Activated B cell treated with CpG ODN at 0.5 μM for 24 hours (primary cell): ENCODE measurements at regions of chr1 and their contacts with region 1.

Region 1: GRCh38 chr1:6613361-6614018 is at the start of gene PHF13:
- DNase-seq: peak; percentile 99
- ATAC-seq: peak; percentile 96
- H3K4me3 Mint-ChIP-seq: peak within 1 kb of the TSS; percentile 90
- H3K27ac Mint-ChIP-seq: peak within 1 kb of the TSS; percentile 83
- H3K4me1 Mint-ChIP-seq: peaks cover 15% of the 10 kb centered on the region
- H3K27me3 Mint-ChIP-seq: no peaks in the 10 kb centered on the region
- CTCF ChIP-seq: no peak
- total RNA-seq, gene PHF13: 5.4 and 6.1 TPM in 2 replicates

Region 2: DNA sequence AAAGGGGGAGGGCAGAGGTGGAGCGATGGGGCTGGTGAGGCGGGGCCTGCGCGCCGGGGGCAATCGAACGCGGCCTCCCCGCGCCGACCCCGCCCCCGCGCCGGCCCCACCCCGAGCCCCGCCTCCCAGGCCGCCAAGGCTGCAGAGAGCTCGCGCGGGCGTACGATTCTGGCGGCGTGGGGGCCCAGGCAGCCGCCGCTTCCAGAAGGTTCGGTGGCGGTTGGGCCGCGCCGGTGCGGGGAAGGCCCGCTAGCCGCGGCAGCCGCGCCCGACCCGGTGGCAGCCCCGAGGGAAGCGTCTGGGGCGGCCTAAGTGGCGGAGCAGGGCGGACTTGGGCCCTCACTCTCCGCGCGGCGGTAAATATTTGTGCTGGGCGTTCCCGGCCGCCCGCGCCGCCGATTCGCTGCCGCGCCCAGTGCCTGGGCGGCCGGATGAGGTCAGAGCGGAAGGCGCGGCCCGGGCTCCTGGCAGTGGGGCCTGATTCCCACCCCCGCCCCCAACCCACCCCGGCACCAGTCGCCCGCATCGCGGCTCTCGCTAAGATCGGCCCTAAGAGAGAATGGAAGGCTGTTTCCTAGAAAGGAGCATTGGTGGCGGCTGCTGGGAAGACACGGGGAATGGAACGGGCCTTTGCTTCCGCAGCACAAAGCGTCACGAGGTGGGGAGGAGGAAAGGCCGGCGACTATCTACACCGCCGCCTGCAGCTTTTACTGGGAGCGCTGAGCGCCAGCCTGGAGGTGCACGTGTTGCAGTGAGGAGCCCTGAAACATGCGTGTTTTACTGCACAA is 219.9 kb before region 1 on chr1 and contains the start of gene ACOT7:
- CTCF ChIA-PET with region 1: no interaction called
- POLR2A ChIA-PET with region 1: no interaction called
- intact Hi-C with region 1: loop called (anchors 5 kb)
- DNase-seq: peak; percentile 86
- ATAC-seq: peak; percentile 91
- H3K4me3 Mint-ChIP-seq: peak within 1 kb of the TSS; percentile 87
- H3K27ac Mint-ChIP-seq: peak within 1 kb of the TSS; percentile 93
- H3K4me1 Mint-ChIP-seq: peaks cover 22% of the 10 kb centered on the region
- H3K27me3 Mint-ChIP-seq: no peaks in the 10 kb centered on the region
- CTCF ChIP-seq: no peak
- total RNA-seq, gene ACOT7: 12.3 and 12.7 TPM in 2 replicates

Region 3: DNA sequence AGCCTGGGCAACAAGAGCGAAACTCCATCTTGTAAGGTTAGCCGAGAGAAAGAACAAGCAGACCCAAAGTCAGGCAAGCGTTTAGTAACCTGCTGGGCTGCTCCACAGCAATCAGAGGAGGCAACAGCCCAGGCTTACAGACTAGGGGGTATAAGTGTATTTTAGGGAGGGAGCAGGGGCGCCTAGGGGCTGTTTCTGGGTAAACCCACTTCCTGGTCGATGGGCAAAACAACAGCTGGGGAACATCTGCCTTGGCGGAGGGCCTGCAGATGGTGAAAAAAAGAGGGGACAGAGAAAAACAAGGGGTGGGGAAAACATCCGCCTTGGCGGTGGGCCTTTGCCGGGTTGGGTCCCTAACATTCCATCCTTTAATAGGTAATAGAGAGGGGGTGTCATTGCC is 53.2 kb before region 1 on chr1:
- CTCF ChIA-PET with region 1: no interaction called
- POLR2A ChIA-PET with region 1: no interaction called
- intact Hi-C with region 1: no loop called
- DNase-seq: no peak
- ATAC-seq: no peak
- H3K4me3 Mint-ChIP-seq: no peak overlapping the region
- H3K27ac Mint-ChIP-seq: no peak overlapping the region
- H3K4me1 Mint-ChIP-seq: peaks cover 1% of the 10 kb centered on the region
- H3K27me3 Mint-ChIP-seq: peaks cover 1% of the 10 kb centered on the region
- CTCF ChIP-seq: no peak

Region 4: DNA sequence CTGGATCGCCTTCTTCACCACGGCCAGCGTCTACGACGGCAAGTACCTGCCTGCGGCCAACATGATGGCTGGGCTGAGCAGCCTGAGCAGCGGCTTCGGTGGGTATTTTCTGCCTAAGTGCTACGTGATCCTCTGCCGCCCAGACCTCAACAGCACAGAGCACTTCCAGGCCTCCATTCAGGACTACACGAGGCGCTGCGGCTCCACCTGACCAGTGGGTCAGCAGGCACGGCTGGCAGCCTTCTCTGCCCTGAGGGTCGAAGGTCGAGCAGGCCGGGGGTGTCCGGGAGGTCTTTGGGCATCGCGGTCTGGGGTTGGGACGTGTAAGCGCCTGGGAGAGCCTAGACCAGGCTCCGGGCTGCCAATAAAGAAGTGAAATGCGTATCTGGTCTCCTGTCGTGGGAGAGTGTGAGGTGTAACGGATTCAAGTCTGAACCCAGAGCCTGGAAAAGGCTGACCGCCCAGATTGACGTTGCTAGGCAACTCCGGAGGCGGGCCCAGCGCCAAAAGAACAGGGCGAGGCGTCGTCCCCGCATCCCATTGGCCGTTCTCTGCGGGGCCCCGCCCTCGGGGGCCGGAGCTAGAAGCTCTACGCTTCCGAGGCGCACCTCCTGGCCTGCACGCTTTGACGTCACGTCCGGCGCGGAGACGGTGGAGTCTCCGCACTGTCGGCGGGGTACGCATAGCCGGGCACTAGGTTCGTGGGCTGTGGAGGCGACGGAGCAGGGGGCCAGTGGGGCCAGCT is 33.9 kb before region 1 on chr1 and contains the start of gene ZBTB48:
- CTCF ChIA-PET with region 1: no interaction called
- POLR2A ChIA-PET with region 1: interaction called, 16 read pairs
- intact Hi-C with region 1: loop called (anchors 1 kb)
- DNase-seq: peak; percentile 95
- ATAC-seq: peak; percentile 97
- H3K4me3 Mint-ChIP-seq: peak within 1 kb of the TSS; percentile 95
- H3K27ac Mint-ChIP-seq: peak within 1 kb of the TSS; percentile 94
- H3K4me1 Mint-ChIP-seq: peaks cover 37% of the 10 kb centered on the region
- H3K27me3 Mint-ChIP-seq: no peaks in the 10 kb centered on the region
- CTCF ChIP-seq: no peak
- total RNA-seq, gene ZBTB48: 53.2 and 53.8 TPM in 2 replicates

Region 5: GRCh38 chr1:6624710-6625583 is 11.5 kb after region 1 on chr1 and contains the start of gene THAP3:
- CTCF ChIA-PET with region 1: no interaction called
- POLR2A ChIA-PET with region 1: interaction called, 3 read pairs
- intact Hi-C with region 1: loop called (anchors 1 kb)
- DNase-seq: peak; percentile 83
- ATAC-seq: peak; percentile 97
- H3K4me3 Mint-ChIP-seq: peak within 1 kb of the TSS; percentile 86
- H3K27ac Mint-ChIP-seq: peak within 1 kb of the TSS; percentile 71
- H3K4me1 Mint-ChIP-seq: peaks cover 32% of the 10 kb centered on the region
- H3K27me3 Mint-ChIP-seq: no peaks in the 10 kb centered on the region
- CTCF ChIP-seq: no peak
- total RNA-seq, gene THAP3: 16.2 and 21.3 TPM in 2 replicates

Region 6: GRCh38 chr1:6743189-6744101 is 130.0 kb after region 1 on chr1:
- CTCF ChIA-PET with region 1: no interaction called
- POLR2A ChIA-PET with region 1: no interaction called
- intact Hi-C with region 1: no loop called
- DNase-seq: peak; percentile 16
- ATAC-seq: peak; percentile 50
- H3K4me3 Mint-ChIP-seq: no peak overlapping the region
- H3K27ac Mint-ChIP-seq: no peak overlapping the region
- H3K4me1 Mint-ChIP-seq: peaks cover 12% of the 10 kb centered on the region
- H3K27me3 Mint-ChIP-seq: peaks cover 7% of the 10 kb centered on the region
- CTCF ChIP-seq: no peak

Region 7: GRCh38 chr1:7704214-7705047 is 1090.9 kb after region 1 on chr1:
- CTCF ChIA-PET with region 1: no interaction called
- POLR2A ChIA-PET with region 1: no interaction called
- intact Hi-C with region 1: loop called (anchors 5 kb)
- DNase-seq: peak; percentile 99
- ATAC-seq: peak; percentile 98
- H3K4me3 Mint-ChIP-seq: peak overlapping the region; percentile 82
- H3K27ac Mint-ChIP-seq: no peak overlapping the region
- H3K4me1 Mint-ChIP-seq: peaks cover 12% of the 10 kb centered on the region
- H3K27me3 Mint-ChIP-seq: peaks cover 11% of the 10 kb centered on the region
- CTCF ChIP-seq: no peak